Dorsolateral prefrontal cortex (tissue), 120 donors: ENCODE measurements at regions of chr17 and their contacts with region 1.

Region 1: DNA sequence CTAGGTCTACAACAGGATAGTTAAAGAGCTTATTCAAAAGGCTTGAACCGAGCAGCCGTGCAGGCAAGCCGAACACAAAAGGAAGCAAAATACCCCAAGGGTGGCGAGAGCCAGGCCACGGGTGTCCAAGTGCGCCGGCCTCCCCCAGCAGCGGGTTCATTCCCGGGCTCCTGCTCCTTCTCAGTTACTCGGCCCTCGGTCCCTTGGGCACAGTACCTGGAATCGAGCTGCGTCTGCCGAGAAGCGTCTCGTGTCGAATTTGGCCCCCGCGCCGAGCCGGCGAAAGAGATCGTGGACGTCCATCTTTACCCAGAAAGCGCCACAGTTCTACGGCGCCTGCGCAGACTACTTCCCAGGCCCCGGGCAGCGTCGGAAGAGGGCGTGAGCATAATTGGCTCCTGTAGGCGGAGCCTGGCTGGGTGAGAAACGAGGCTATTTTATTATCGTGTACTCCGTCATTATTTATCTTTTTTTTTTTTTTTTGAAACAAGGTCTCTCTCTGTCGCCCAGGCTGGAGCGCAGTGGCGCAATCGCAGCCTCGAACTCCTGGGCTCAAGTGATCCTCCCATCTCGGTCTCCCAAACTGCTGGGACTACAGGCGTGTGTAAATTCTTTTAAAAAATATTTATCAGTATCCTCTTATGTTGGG is at the start of gene DDX52:
- DNase-seq: peak; percentile 81 to 91 (median 86)
- H3K4me3 ChIP-seq: peak within 1 kb of the TSS; percentile 63 to 97 (median 89)
- H3K27ac ChIP-seq: peak within 1 kb of the TSS in 58 of 59 donors; percentile 20 to 96 (median 88)
- H3K27me3 ChIP-seq: no peaks in the 10 kb centered on the region
- CTCF ChIP-seq: peak in 51 of 56 donors; percentile 27 to 71 (median 53)
- total RNA-seq, gene DDX52: 12.7 to 29.4 (median 20.7) TPM

Region 2: DNA sequence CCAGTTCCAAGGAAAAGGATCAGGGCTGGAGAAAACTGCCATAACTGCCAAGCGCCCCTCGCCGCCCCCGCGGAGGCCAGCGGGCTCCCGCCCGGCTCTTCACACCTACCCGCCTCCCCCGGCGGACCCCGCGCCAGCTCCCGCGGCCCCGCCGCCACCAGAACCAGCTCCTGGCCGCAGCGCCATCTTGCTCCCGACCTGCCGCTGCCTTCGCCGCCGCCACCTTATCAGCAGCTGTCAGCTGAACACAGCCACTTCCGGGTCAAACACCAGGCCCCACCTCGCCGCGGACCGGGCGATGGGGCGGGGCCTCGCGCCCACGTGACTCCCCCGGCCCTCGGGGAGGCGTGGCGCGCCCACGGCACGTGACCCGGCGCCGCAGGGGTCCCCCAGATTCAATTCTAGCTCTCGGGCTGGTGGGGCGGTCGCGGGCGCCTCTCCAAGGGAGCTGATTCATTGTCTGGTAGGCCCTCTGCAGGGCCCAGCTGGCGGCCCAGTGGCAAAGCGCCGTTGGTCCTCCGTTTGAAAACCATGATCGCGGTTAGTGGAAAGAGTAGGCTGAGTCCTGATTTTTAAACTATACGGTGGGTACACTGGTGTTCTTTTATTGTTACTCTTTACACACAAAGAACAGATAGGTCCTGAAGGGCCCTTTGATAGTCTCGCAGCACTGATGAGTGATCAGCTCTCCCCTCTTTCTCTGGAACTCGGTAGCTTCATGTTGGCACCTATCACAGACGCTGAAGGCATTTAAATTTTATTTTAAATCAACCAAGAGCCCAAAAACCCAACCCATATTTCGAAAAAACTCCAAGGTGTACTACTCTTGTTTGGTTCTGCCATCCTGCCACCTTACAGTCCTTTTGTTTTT is 33.8 kb before region 1 on chr17 and contains the start of gene SYNRG:
- intact Hi-C with region 1: loop called in 1 of 2 experiments (anchors 2 kb)
- DNase-seq: peak; percentile 94 to 99 (median 98)
- H3K4me3 ChIP-seq: peak within 1 kb of the TSS; percentile 62 to 100 (median 94)
- H3K27ac ChIP-seq: peak within 1 kb of the TSS; percentile 70 to 99 (median 93)
- H3K27me3 ChIP-seq: no peaks in the 10 kb centered on the region
- CTCF ChIP-seq: peak in 54 of 56 donors; percentile 32 to 77 (median 59)
- total RNA-seq, gene SYNRG: 40.6 to 67.2 (median 51.6) TPM

Region 3: GRCh38 chr17:37761059-37761458 is 117.8 kb after region 1 on chr17:
- intact Hi-C with region 1: no loop called
- DNase-seq: no peak
- H3K4me3 ChIP-seq: no peak overlapping the region
- H3K27ac ChIP-seq: no peak overlapping the region
- H3K27me3 ChIP-seq: peaks cover 0 to 66% (median 4%) of the 10 kb centered on the region in 45 donors
- CTCF ChIP-seq: no peak